ENCODE measurements at regions of chr19 and their contacts with region 1.

Region 1: DNA sequence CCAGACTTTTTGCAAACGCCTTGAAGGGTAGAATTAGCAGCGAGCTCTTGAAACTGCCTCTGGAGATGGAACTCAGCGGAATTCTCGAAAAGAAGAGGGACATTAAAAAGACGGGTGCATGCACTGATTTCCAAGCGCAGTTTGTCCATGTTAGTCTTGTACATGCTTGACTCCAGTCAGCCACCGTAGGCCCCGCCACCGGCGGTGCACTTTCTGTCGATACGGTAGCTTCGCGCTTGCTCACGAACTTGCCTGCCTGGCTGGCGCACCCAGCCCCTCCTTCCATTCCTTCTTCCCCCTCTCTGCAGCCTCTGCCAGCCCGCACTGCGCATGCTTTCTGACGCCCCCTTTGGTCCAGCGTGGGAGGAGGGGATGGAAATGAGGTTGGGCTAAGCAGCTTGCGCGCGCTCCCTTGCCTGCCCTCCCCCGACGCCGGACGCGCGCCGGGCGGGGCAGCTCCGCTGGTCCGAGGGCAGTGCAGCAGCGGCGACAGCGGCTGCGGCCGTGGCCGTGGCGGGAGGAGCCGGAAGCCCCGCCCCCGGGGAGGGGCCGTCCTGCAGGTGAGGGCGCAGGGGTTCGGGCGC is at the start of gene ZNF575:
- DNase-seq: peak; percentile 61 to 94
- H3K4me3 ChIP-seq: peak within 1 kb of the TSS; percentile 73 to 75
- H3K27ac ChIP-seq: peak within 1 kb of the TSS; percentile 84 to 92
- H3K4me1 ChIP-seq: peaks cover 0 to 22% of the 10 kb centered on the region in 2 donors
- H3K27me3 ChIP-seq: no peaks in the 10 kb centered on the region
- CTCF ChIP-seq: peak in 1 of 3 experiments; percentile 4
- total RNA-seq, gene ZNF575: not detected

Region 2: GRCh38 chr19:43503501-43504425 is 29.3 kb before region 1 on chr19:
- intact Hi-C with region 1: loop called (anchors 1 kb)
- DNase-seq: peak; percentile 90 to 98
- H3K4me3 ChIP-seq: peak overlapping the region; percentile 75 to 78
- H3K27ac ChIP-seq: peak overlapping the region; percentile 87
- H3K4me1 ChIP-seq: peaks cover 3 to 8% of the 10 kb centered on the region in 2 donors
- H3K27me3 ChIP-seq: no peaks in the 10 kb centered on the region
- CTCF ChIP-seq: peak in 2 of 3 experiments; percentile 17 to 33

Region 3: GRCh38 chr19:43555185-43555770 is 22.2 kb after region 1 on chr19:
- intact Hi-C with region 1: no loop called
- DNase-seq: peak in 1 of 2 donors; percentile 79
- H3K4me3 ChIP-seq: no peak overlapping the region
- H3K27ac ChIP-seq: no peak overlapping the region
- H3K4me1 ChIP-seq: no peaks in the 10 kb centered on the region
- H3K27me3 ChIP-seq: no peaks in the 10 kb centered on the region
- CTCF ChIP-seq: peak; percentile 35 to 58 (median 55)

Region 4: GRCh38 chr19:43595999-43596841 is 63.2 kb after region 1 on chr19 and contains the starts of genes IRGQ and ZNF576:
- intact Hi-C with region 1: loop called (anchors 1 kb)
- DNase-seq: peak; percentile 99 to 100
- H3K4me3 ChIP-seq: peak within 1 kb of the TSS; percentile 59 to 88
- H3K27ac ChIP-seq: peak within 1 kb of the TSS; percentile 94 to 99
- H3K4me1 ChIP-seq: peaks cover 22 to 23% of the 10 kb centered on the region in 2 donors
- H3K27me3 ChIP-seq: no peaks in the 10 kb centered on the region
- CTCF ChIP-seq: no peak
- total RNA-seq, gene IRGQ: 17.2 TPM
- total RNA-seq, gene ZNF576: 3.1 TPM

Region 5: DNA sequence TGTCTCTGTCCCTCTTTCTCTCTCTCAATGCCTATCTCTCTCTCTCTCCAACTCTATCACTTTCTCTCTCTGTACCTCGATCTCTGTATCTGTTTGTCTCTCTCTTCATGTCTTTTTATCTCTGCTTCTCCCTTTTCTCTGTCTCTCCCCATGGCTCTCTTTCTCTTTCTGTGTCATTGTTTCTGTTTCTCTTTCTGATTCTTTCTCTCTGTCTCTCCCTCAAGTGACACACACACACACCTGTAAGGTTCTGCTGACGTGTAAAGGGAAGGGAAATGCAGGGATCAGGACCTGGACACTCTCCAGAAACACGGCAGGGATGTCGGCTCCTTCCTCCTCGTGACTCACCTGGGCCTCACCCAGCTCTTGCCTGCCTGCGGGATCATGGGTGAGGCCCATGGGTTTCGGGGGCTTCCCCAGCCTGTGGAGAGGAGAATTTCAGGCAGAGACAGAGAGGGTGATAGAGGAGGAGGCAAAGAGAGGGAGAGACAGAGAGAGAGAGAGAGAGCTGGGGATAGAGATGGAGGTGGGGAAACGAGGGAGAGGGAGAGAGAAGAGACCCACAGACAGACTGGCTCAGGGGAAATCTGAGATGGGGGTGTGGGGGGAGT is 142.3 kb after region 1 on chr19:
- intact Hi-C with region 1: no loop called
- DNase-seq: no peak
- H3K4me3 ChIP-seq: no peak overlapping the region
- H3K27ac ChIP-seq: no peak overlapping the region
- H3K4me1 ChIP-seq: peaks cover 0 to 2% of the 10 kb centered on the region in 2 donors
- H3K27me3 ChIP-seq: no peaks in the 10 kb centered on the region
- CTCF ChIP-seq: no peak

Region 6: DNA sequence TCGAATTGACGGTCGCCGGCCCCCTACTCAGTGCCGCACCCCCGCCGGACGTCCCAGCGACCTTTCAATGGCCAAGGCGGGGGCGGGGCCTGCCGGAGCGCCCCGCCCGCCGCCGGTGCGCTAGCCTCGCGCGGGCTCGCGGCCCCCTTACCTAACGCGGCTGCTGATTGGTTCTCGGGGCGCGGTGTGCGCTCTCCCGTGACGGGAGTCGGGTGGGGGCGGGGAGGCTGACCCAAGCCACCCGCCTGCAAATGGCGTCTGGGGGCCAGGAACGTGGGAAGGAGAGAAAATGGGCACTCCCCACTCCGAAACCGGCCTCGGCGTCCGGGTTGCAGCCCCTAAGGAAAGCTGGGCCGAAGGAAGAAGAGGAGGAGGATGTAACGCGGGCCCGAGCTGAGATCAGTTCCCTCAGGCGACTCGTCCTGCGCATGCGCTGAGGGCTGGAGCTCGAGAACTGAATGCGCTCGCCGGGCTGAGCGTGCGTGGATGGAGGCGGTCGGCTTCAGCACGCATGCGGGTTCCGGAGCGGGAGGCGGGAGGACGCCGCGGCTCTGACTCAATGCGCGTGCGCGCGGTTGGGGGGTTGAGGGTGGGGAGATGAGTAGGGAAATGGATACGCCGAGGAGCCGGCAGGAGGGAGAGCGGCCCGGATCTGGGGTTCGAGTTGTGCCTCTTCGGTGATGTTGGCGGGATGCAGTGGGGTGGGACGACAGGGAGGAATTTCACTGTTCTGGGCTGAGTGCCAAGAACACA is 221.6 kb after region 1 on chr19 and contains the start of gene SMG9:
- intact Hi-C with region 1: loop called (anchors 1 kb)
- DNase-seq: peak; percentile 87 to 98
- H3K4me3 ChIP-seq: peak within 1 kb of the TSS; percentile 77 to 92
- H3K27ac ChIP-seq: peak within 1 kb of the TSS; percentile 99
- H3K4me1 ChIP-seq: peaks cover 3 to 26% of the 10 kb centered on the region in 2 donors
- H3K27me3 ChIP-seq: no peaks in the 10 kb centered on the region
- CTCF ChIP-seq: no peak
- total RNA-seq, gene SMG9: 126 TPM

Region 7: DNA sequence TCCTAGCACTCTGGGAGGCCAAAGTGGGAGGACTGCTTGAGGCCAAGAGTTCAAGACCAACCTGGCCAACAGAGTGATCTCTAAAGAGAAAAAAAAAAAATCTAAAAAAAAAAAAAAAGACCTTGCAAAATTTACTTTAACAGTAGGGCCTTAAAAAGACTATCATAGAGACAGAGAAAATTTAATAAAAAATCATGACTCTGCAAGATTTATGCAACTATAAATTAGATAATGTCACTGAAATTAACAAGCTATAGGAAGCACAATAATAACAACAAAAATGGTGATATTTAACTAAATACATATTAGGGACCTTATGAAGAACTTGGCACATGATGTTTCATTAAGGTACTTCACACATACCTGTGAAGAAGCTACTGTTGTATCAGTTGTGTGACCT is 390.8 kb after region 1 on chr19:
- intact Hi-C with region 1: no loop called
- DNase-seq: no peak
- H3K4me3 ChIP-seq: no peak overlapping the region
- H3K27ac ChIP-seq: no peak overlapping the region
- H3K4me1 ChIP-seq: no peaks in the 10 kb centered on the region
- H3K27me3 ChIP-seq: no peaks in the 10 kb centered on the region
- CTCF ChIP-seq: no peak

Measured in ascending aorta (tissue), 2 donors.